H1 (cell line): ENCODE measurements at regions of chr16 and their contacts with region 1.

Region 1: DNA sequence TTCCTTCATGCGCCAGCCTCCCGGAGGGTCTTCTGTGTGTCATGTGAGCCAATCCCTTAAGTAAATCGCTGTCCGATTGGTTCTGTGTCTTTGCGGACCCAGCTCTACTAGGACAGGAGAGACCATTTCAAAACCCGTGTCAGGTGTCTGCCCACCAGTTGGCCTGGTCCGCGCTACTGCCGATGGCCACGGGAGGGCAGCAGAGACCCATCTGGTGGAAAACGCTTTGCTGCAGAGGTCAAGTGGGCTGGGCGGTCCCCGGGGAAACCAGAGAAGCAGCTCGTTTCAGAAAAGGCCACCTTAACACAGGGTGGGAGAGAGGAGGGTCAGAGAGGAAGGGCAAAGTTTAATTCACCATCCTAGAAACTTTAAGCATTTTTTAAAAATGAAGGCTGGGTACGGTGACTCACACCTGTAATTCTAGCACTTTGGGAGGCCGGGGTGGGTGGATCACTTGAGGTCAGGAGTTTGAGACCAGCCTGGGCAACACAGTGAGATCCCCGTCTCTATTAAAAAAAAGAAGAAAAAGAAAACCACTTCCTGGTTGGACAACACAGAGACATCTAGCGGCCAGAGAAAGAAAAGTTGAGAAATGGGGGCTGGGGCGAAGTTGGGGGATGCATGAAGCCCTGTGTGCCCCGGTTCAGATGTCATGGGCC is 2.8 kb upstream of the CIBAR2 start:
- DNase-seq: peak; percentile 83 to 100
- H3K4me3 ChIP-seq: no peak overlapping the region
- H3K27ac ChIP-seq: no peak overlapping the region
- H3K4me1 ChIP-seq: peaks cover 0 to 3% (median 1%) of the 10 kb centered on the region in 4 experiments; a peak in 2 of 7 replicates
- H3K27me3 ChIP-seq: 0 out of 7 replicates have a peak, but pooled peaks cover 0 to 2% (median 0%) of the 10 kb centered on the region in 4 experiments
- CTCF ChIP-seq: peak; percentile 96 to 99 (median 97)
- EP300 ChIP-seq: 0 out of 3 replicates have a peak, but pooled peaks of 1 of the 2 experiments have one; percentile 8
- POLR2A ChIP-seq: no peak
- RAD21 ChIP-seq: peak; percentile 98 to 99

Region 2: DNA sequence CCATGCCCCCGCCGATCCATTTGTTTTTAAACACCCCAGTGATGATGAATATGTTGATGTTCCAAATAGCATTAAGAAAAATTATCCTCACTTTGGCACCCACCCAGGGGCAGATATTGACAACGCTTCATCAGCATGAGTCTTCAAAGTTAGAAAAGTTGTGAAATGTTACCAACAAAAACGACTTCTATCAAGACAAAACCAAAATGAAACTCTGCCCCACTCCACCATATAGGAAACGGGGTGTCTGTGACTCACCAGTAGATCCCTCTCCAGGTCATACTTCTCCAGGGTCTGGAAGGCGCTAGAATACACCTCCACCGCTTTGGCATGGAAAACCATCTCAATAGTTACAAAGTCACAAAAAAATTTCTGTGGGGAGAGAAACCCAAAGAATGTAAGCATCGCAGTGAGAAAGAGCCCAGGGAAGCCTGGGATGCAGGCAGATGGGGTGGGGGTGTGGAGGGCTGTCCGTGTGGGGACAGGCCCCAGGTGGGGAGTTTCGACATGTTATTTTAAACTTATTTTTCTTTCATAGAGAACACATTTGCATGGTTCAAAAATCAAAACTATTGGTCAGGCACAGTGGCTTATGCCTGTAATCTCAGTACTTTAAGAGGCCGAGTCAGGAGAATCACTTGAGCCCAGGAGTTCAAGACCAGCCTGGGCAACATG is 12.9 kb before region 1 on chr16:
- CTCF ChIA-PET with region 1: interaction called, 11 read pairs
- POLR2A ChIA-PET with region 1: interaction called, 3 read pairs
- DNase-seq: no peak
- H3K4me3 ChIP-seq: no peak overlapping the region
- H3K27ac ChIP-seq: no peak overlapping the region
- H3K4me1 ChIP-seq: no peaks in the 10 kb centered on the region
- H3K27me3 ChIP-seq: no peaks in the 10 kb centered on the region
- CTCF ChIP-seq: no peak
- EP300 ChIP-seq: no peak
- POLR2A ChIP-seq: no peak
- RAD21 ChIP-seq: no peak

Region 3: DNA sequence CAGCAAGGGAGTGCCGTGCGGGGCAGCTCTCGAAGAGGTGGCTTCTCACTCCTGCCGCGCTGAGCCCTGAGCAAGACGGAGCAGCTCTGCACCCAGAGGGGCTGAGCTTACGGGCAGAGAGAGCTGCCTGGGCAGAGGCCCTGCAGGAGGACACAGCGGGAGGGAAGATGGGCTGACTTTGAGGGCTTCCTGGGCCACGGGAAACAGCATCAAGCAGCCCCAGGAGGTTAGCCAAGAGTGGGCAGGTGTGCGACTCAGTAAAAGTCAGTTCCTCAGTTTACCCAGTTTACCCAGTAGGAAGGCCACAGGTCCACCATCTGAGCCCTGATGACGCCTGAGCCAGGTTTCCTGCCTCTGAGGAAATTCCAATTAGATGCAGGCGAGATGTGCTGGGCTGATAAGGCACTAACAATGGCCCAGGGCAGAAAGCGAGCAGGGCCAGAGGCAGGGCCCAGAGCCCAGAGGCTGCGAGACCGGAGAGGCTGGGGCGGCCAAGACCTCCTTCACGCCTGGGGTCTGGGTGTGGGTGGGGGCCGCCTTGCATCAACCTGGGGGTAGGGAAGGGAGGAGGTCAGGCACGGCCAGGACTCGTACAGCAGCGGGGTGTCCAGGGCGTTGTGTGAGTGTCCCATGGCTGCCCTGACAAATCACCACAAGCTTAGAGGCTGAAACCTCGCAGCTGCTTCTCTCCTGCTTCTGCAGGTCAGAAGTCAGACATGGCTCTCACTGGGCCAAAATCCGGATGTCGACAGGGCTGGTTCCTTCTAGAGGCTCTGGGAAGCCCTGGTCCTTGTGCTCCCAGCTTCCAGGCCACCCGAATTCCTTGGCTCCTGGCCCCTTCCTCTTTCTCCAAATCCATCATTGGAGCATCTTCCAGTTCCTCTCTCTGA is 29.2 kb after region 1 on chr16:
- CTCF ChIA-PET with region 1: interaction called, 10 read pairs
- POLR2A ChIA-PET with region 1: no interaction called
- DNase-seq: no peak
- H3K4me3 ChIP-seq: no peak overlapping the region
- H3K27ac ChIP-seq: no peak overlapping the region
- H3K4me1 ChIP-seq: peaks cover 0 to 2% (median 0%) of the 10 kb centered on the region in 4 experiments; a peak in 1 of 7 replicates
- H3K27me3 ChIP-seq: no peaks in the 10 kb centered on the region
- CTCF ChIP-seq: no peak
- EP300 ChIP-seq: no peak
- POLR2A ChIP-seq: no peak
- RAD21 ChIP-seq: no peak

Region 4: DNA sequence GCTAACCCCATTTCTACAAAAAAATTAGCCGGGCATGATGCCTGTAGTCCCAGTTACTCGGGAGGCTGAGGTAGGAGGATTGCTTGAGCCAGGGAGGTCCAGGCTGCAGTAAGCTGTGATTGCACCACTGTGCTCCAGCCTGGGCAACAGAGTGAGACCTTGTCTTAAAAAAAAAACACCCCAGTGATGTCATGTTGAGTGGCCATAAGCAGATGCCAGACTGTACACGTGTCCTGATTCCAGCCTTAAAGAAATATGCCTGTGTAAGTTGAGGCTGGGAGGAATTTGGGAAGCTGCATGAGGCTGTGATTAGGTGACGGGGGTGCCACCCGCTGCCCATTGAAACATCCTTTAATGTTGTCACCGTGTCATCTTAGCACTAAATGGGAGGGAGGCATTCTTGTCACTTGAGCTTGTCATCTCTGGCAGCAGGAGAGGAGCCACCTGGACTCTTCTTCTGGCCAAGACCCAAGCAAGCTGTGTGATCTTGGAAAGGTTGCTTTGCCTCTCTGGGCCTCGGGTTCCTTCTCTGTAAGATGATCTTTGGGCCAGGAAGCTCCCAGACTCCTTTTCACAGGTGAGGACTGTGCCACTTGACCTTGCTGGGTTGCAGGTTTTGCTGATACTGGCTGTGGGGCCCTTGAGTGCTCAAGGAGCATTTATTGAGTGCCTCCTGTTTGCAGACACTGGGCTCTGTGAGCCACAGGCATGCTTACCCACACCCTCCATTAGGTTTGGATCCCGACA is 95.6 kb after region 1 on chr16:
- CTCF ChIA-PET with region 1: interaction called, 10 read pairs
- POLR2A ChIA-PET with region 1: no interaction called
- DNase-seq: no peak
- H3K4me3 ChIP-seq: no peak overlapping the region
- H3K27ac ChIP-seq: no peak overlapping the region
- H3K4me1 ChIP-seq: peaks cover 2 to 24% (median 19%) of the 10 kb centered on the region in 4 experiments
- H3K27me3 ChIP-seq: no peaks in the 10 kb centered on the region
- CTCF ChIP-seq: no peak
- EP300 ChIP-seq: no peak
- POLR2A ChIP-seq: no peak
- RAD21 ChIP-seq: no peak

Region 5: GRCh38 chr16:85253084-85253941 is 138.3 kb after region 1 on chr16:
- CTCF ChIA-PET with region 1: interaction called, 18 read pairs
- POLR2A ChIA-PET with region 1: no interaction called
- DNase-seq: peak in 1 of 2 experiments; percentile 95
- H3K4me3 ChIP-seq: no peak overlapping the region
- H3K27ac ChIP-seq: peak overlapping the region; percentile 14; the same call in 1 of the 2 replicates
- H3K4me1 ChIP-seq: peaks cover 0 to 11% (median 2%) of the 10 kb centered on the region in 4 experiments; a peak in 4 of 7 replicates
- H3K27me3 ChIP-seq: no peaks in the 10 kb centered on the region
- CTCF ChIP-seq: peak; percentile 96 to 99 (median 98)
- EP300 ChIP-seq: no peak
- POLR2A ChIP-seq: no peak
- RAD21 ChIP-seq: peak; percentile 65 to 81

Region 6: DNA sequence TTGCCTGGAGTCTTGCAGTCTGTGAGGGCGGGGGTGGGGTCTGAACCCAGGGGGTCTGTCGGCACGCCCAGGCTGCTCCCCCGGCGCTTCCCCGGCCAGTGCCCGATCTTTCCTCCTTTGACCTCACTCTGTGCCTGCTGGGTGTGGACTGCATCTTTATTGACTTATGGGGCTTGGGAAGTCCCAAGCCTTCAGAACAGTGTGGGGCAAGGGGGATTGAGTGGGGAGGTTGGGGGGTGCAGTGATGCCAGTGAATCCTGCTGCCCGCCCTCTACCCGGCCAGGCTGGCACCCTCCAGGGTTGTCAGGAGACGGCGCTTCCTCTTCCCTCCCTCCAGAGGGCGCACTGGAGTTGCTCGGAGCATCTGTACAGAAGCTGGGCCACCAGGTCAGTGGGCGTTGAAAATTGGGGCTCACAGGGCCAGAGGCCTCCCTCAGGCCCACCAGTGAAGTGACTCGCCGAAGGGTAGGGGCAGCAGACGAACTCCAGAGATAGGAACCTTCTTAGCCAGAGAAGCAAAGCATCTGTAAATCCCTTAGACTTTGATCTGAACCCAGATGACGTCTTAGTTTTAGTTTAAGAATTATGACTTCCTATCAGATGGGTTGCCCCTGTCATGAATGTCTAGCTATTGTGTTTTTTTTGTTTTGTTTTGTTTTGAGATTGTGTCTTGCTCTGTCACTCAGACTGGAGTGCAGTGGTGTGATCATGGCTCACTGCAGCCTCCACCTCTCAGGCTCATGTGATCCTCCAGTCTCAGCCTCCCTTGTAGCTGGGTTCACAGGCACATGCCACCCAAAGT is 182.0 kb after region 1 on chr16:
- CTCF ChIA-PET with region 1: interaction called, 12 read pairs
- POLR2A ChIA-PET with region 1: no interaction called
- DNase-seq: peak in 1 of 2 experiments; percentile 87
- H3K4me3 ChIP-seq: no peak overlapping the region
- H3K27ac ChIP-seq: no peak overlapping the region
- H3K4me1 ChIP-seq: no peaks in the 10 kb centered on the region
- H3K27me3 ChIP-seq: no peaks in the 10 kb centered on the region; a peak in 1 of 7 replicates
- CTCF ChIP-seq: peak; percentile 91 to 93 (median 91)
- EP300 ChIP-seq: no peak
- POLR2A ChIP-seq: no peak
- RAD21 ChIP-seq: peak; percentile 49 to 68; a peak in 3 of 4 replicates